CD14-positive monocyte (primary cell): ENCODE measurements at regions of chr2 and their contacts with region 1.

Region 1: DNA sequence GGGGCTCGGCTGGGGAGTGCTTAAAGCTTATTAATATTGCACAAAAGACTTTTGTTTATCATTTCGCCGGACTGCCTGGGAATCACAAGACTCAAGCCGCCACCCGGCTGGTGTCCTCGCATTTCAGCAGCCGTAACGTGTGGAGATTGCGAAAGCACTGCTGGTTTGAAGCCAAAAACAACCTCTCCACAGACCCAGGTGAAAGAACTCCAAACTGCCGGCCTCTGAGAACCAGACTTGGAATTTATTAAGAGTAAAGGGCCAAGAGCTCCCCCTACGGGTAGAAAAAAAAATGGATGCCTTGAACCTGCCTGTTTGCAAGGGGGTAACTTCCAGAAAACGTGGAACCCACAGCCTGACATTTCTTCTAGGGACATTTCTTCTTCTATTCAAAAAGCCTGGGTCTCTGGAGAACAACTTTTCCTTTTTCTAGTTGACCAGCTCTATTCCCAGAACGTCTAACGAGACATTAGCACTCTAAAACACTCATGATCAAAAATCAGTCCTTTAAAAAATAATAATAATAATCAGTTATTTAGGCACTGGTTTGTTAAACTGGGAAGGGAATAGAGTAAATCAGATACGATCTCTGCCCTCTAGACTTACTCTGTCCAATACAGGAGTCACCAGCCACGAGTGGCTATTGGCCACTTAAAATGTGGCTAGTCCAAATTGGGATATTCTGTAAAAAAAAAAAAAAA is 216.3 kb downstream of the C1D start:
- DNase-seq: peak; percentile 3 to 22 (median 5)
- H3K4me3 ChIP-seq: no peak overlapping the region
- H3K4me3 Mint-ChIP-seq: peak overlapping the region in 1 of 2 donors; percentile 36
- H3K27ac ChIP-seq: no peak overlapping the region
- H3K27ac Mint-ChIP-seq: peak overlapping the region in 1 of 7 donors; percentile 33
- H3K4me1 ChIP-seq: no peaks in the 10 kb centered on the region
- H3K4me1 Mint-ChIP-seq: peaks cover 2% of the 10 kb centered on the region
- H3K27me3 ChIP-seq: peaks cover 0 to 7% of the 10 kb centered on the region in 2 donors
- H3K27me3 Mint-ChIP-seq: peaks cover 3 to 16% (median 7%) of the 10 kb centered on the region in 3 donors
- CTCF ChIP-seq: peak; percentile 86

Region 2: DNA sequence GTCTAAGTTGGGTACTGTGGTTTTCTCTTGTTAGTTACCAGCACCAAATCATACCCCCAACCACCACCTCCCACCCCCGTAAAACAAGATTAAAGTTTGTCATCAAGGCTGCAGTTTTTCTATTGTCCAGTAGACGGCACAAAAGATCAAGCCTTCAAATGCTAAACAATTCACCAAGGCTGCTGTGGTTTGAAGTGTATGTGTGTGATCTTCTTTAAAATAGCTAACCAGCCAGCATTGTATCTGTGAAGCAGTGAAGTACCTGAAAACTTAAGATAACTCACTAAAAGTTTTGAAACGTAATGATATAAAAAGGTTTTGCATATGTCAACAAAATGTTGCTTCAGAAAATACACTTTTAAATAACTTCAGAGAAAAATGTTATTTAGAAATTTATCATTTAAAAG is 1417.4 kb before region 1 on chr2:
- intact Hi-C with region 1: loop called (anchors 5 to 10 kb)
- DNase-seq: peak in 1 of 3 donors; percentile 16
- H3K4me3 ChIP-seq: no peak overlapping the region
- H3K4me3 Mint-ChIP-seq: peak overlapping the region in 1 of 2 donors; percentile 71
- H3K27ac ChIP-seq: no peak overlapping the region
- H3K27ac Mint-ChIP-seq: no peak overlapping the region
- H3K4me1 ChIP-seq: peaks cover 15 to 22% of the 10 kb centered on the region in 2 donors
- H3K4me1 Mint-ChIP-seq: peaks cover 28% of the 10 kb centered on the region
- H3K27me3 ChIP-seq: peaks cover 75 to 96% of the 10 kb centered on the region in 2 donors
- H3K27me3 Mint-ChIP-seq: peaks cover 87 to 93% (median 88%) of the 10 kb centered on the region in 3 donors
- CTCF ChIP-seq: peak; percentile 79

Region 3: DNA sequence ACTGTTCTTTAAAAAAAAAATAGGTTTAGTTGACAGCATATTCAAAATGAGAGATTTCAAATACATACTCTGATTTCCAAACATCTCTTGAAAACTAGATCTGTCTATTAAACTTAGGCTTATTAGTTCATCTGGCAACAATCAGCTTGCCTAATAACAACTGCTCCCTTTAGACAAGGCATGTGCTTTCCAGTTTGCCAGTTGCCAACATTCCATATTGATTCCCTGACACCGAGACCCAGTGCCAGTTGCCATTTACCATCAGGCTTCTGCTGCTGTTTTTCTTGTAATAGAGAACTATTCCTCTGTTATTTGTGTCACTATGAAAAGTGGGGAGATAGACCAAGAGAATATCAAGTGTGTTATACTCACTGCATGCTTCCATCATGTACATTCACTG is 39.7 kb before region 1 on chr2:
- intact Hi-C with region 1: no loop called
- DNase-seq: no peak
- H3K4me3 ChIP-seq: no peak overlapping the region
- H3K4me3 Mint-ChIP-seq: no peak overlapping the region
- H3K27ac ChIP-seq: no peak overlapping the region
- H3K27ac Mint-ChIP-seq: no peak overlapping the region
- H3K4me1 ChIP-seq: no peaks in the 10 kb centered on the region
- H3K4me1 Mint-ChIP-seq: no peaks in the 10 kb centered on the region
- H3K27me3 ChIP-seq: no peaks in the 10 kb centered on the region
- H3K27me3 Mint-ChIP-seq: peaks cover 0 to 2% (median 1%) of the 10 kb centered on the region in 3 donors
- CTCF ChIP-seq: no peak